CD8-positive, alpha-beta T cell (primary cell): ENCODE measurements at regions of chr20 and their contacts with region 1.

Region 1: GRCh38 chr20:37081717-37082289 is 14.0 kb downstream of the RBL1 start:
- DNase-seq: peak; percentile 22 to 70 (median 53)
- ATAC-seq: peak; percentile 61
- H3K4me3 ChIP-seq: no peak overlapping the region
- H3K4me3 Mint-ChIP-seq: no peak overlapping the region
- H3K27ac ChIP-seq: no peak overlapping the region
- H3K27ac Mint-ChIP-seq: peak overlapping the region; percentile 72
- H3K4me1 ChIP-seq: peaks cover 11% of the 10 kb centered on the region
- H3K4me1 Mint-ChIP-seq: peaks cover 25% of the 10 kb centered on the region
- H3K27me3 ChIP-seq: no peaks in the 10 kb centered on the region
- H3K27me3 Mint-ChIP-seq: no peaks in the 10 kb centered on the region
- CTCF ChIP-seq: peak; percentile 62

Region 2: GRCh38 chr20:36819659-36820058 is 262.1 kb before region 1 on chr20:
- CTCF ChIA-PET with region 1: no interaction called
- POLR2A ChIA-PET with region 1: no interaction called
- intact Hi-C with region 1: no loop called
- DNase-seq: no peak
- ATAC-seq: no peak
- H3K4me3 ChIP-seq: no peak overlapping the region
- H3K4me3 Mint-ChIP-seq: no peak overlapping the region
- H3K27ac ChIP-seq: no peak overlapping the region
- H3K27ac Mint-ChIP-seq: no peak overlapping the region
- H3K4me1 ChIP-seq: no peaks in the 10 kb centered on the region
- H3K4me1 Mint-ChIP-seq: no peaks in the 10 kb centered on the region
- H3K27me3 ChIP-seq: no peaks in the 10 kb centered on the region
- H3K27me3 Mint-ChIP-seq: no peaks in the 10 kb centered on the region
- CTCF ChIP-seq: no peak

Region 3: DNA sequence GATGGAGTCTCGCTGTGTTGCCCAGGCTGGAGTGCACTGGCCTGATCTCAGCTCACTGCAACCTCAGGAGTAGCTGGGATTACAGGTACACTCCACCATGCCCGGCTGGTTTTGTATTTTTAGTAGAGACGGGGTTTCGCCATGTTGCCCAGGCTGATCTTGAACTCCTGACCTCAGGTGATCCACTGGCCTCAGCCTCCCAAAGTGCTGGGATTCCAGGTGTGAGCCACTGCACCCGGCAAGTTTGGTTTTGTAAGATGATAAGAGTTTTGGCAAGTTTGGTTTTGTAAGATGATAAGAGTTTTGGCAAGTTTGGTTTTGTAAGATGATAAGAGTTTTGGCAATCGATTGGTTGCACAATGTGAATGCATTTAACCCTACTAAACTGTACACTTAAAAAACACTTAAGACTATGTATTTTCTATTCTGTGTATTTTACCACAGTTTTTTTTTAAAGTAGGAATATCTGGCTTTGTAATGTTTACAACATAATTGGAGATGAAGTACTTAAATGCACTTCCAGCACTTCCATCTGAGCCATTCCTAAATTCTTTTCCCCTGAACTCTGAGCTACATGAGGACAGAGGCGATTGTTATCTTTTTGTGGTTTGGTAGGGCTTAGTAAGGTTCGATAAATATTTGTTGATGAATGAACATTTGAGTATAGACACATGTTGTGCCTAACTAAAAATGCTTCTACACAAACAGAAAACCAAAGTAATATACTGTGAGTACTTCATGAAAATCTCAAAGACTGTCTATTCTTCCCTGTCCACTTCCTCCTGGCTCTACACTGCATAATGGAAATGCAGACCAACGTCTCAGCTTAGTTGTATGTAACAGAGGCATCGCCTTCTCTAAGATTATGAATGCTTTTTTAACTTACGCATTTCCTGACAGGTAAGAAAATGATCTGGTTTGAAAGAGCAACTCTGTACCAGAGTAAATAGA is 149.1 kb before region 1 on chr20:
- CTCF ChIA-PET with region 1: interaction called, 3 read pairs
- POLR2A ChIA-PET with region 1: no interaction called
- intact Hi-C with region 1: loop called in 1 of 2 experiments (anchors 10 kb)
- DNase-seq: peak in 1 of 9 experiments; percentile 35
- ATAC-seq: no peak
- H3K4me3 ChIP-seq: no peak overlapping the region
- H3K4me3 Mint-ChIP-seq: no peak overlapping the region
- H3K27ac ChIP-seq: peak overlapping the region; percentile 10 to 29
- H3K27ac Mint-ChIP-seq: peak overlapping the region; percentile 69
- H3K4me1 ChIP-seq: peaks cover 65% of the 10 kb centered on the region
- H3K4me1 Mint-ChIP-seq: peaks cover 54% of the 10 kb centered on the region
- H3K27me3 ChIP-seq: no peaks in the 10 kb centered on the region
- H3K27me3 Mint-ChIP-seq: no peaks in the 10 kb centered on the region
- CTCF ChIP-seq: no peak

Region 4: GRCh38 chr20:37020636-37021035 is 61.2 kb before region 1 on chr20:
- CTCF ChIA-PET with region 1: interaction called, 19 read pairs
- POLR2A ChIA-PET with region 1: interaction called, 4 read pairs
- intact Hi-C with region 1: no loop called
- DNase-seq: no peak
- ATAC-seq: no peak
- H3K4me3 ChIP-seq: no peak overlapping the region
- H3K4me3 Mint-ChIP-seq: no peak overlapping the region
- H3K27ac ChIP-seq: no peak overlapping the region
- H3K27ac Mint-ChIP-seq: no peak overlapping the region
- H3K4me1 ChIP-seq: peaks cover 8% of the 10 kb centered on the region
- H3K4me1 Mint-ChIP-seq: peaks cover 20% of the 10 kb centered on the region
- H3K27me3 ChIP-seq: no peaks in the 10 kb centered on the region
- H3K27me3 Mint-ChIP-seq: no peaks in the 10 kb centered on the region
- CTCF ChIP-seq: no peak

Region 5: GRCh38 chr20:37295001-37295400 is 213.2 kb after region 1 on chr20:
- CTCF ChIA-PET with region 1: no interaction called
- POLR2A ChIA-PET with region 1: no interaction called
- intact Hi-C with region 1: no loop called
- DNase-seq: no peak
- ATAC-seq: no peak
- H3K4me3 ChIP-seq: no peak overlapping the region
- H3K4me3 Mint-ChIP-seq: no peak overlapping the region
- H3K27ac ChIP-seq: no peak overlapping the region
- H3K27ac Mint-ChIP-seq: no peak overlapping the region
- H3K4me1 ChIP-seq: peaks cover 25% of the 10 kb centered on the region
- H3K4me1 Mint-ChIP-seq: peaks cover 66% of the 10 kb centered on the region
- H3K27me3 ChIP-seq: no peaks in the 10 kb centered on the region
- H3K27me3 Mint-ChIP-seq: no peaks in the 10 kb centered on the region
- CTCF ChIP-seq: no peak

Region 6: GRCh38 chr20:37396416-37397075 is 314.7 kb after region 1 on chr20:
- CTCF ChIA-PET with region 1: no interaction called
- POLR2A ChIA-PET with region 1: no interaction called
- intact Hi-C with region 1: no loop called
- DNase-seq: no peak
- ATAC-seq: no peak
- H3K4me3 ChIP-seq: no peak overlapping the region
- H3K4me3 Mint-ChIP-seq: no peak overlapping the region
- H3K27ac ChIP-seq: no peak overlapping the region
- H3K27ac Mint-ChIP-seq: no peak overlapping the region
- H3K4me1 ChIP-seq: no peaks in the 10 kb centered on the region
- H3K4me1 Mint-ChIP-seq: no peaks in the 10 kb centered on the region
- H3K27me3 ChIP-seq: no peaks in the 10 kb centered on the region
- H3K27me3 Mint-ChIP-seq: no peaks in the 10 kb centered on the region
- CTCF ChIP-seq: no peak